Mucosa of descending colon (tissue), 3 donors: ENCODE measurements at regions of chr5 and their contacts with region 1.

Region 1: DNA sequence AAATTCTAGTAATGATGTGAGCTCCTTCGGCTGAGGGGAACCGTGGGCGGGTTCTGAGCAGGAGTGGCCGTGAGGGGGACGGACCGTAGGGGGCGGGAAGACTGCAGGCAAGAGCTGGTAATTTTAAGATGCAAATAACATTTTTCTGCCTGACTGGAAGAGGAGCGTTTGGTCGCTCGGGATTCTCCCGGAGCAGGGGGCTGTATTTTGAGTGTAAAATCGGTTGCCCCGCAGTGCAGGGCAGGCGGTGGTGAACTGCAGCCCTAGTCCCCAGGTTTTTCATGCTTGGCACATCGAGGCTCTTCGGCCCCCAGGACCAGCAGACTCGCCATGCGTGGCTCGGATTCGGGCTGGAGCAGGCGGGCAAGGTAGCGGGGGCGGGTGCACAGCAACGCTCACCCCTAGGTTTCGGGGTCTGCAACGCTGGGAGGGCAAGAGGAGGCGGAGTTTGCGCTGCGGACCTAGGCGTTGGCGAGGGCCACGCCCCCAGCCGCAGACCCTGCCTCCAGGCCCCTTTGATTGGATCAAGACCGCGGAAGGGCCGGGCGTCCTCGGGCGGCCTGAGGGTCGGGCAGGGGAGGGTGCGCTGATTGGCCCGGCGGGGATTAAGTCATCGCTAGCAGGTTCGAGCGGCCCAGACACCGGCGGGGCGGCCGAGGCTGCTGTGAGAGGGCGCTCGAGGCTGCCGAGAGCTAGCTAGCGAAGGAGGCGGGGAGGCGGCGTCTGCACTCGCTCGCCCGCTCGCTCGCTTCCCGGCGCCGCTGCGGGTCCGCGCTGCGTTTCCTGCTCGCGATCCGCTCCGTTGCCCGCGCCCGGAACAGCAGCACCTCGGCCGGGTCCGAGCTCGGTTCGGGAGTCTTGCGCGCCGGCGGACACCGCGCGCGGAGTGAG is at the start of gene ARHGAP26:
- DNase-seq: peak; percentile 96 to 99 (median 98)
- ATAC-seq: peak; percentile 93
- H3K4me3 ChIP-seq: peak within 1 kb of the TSS; percentile 67
- H3K4me1 ChIP-seq: peaks cover 19% of the 10 kb centered on the region
- CTCF ChIP-seq: no peak
- total RNA-seq, gene ARHGAP26: 52.9 to 96.0 (median 67.8) TPM

Region 2: DNA sequence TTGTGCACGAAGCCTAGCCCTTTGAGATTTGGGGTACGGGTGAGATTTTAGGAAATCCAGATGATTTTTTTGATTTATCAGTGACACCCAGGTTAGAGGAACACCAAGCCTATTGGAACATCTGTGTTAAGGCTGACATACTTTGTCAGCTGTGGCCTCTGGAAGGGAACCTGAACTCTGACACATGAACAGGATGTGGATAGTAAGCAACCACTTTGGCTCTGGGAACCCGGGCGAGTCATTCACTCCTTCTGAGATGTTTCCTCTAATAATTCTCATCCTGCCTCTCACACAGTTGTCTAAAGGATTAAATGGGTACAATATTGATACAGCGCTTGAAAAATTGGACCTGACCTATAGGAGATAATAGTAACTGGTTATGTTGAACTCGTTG is 151.9 kb before region 1 on chr5:
- intact Hi-C with region 1: no loop called
- DNase-seq: no peak
- ATAC-seq: no peak
- H3K4me3 ChIP-seq: no peak overlapping the region
- H3K4me1 ChIP-seq: no peaks in the 10 kb centered on the region
- CTCF ChIP-seq: no peak

Region 3: DNA sequence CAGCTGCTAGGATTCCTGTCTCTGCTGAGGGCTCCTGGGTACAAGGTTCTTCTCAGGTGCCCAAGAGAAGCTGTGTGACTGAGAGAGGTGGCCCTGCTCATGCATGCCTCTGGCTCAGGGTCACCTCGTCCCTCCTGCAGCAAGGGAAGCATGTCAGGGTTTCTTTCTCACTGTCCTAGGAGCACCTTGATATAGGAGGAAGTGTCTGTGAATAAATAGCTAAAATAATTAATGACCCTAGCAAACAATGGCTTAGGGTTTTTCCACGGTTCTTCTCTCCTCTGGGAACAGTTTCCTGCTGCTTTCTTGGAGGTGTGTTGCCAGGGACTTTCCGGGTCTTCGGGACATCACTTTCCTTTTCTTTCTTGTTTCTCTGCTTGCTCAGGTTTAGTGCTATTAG is 87.4 kb after region 1 on chr5:
- intact Hi-C with region 1: loop called (anchors 10 kb)
- DNase-seq: no peak
- ATAC-seq: peak; percentile 47
- H3K4me3 ChIP-seq: no peak overlapping the region
- H3K4me1 ChIP-seq: peaks cover 3% of the 10 kb centered on the region
- CTCF ChIP-seq: no peak

Region 4: GRCh38 chr5:142869883-142870282 is 99.9 kb after region 1 on chr5:
- intact Hi-C with region 1: loop called in 1 of 2 experiments (anchors 10 kb)
- DNase-seq: peak; percentile 58 to 72 (median 67)
- ATAC-seq: peak; percentile 18
- H3K4me3 ChIP-seq: no peak overlapping the region
- H3K4me1 ChIP-seq: peaks cover 52% of the 10 kb centered on the region
- CTCF ChIP-seq: no peak